CD8-positive, alpha-beta memory T cell (primary cell): ENCODE measurements at regions of chr6 and their contacts with region 1.

Region 1: GRCh38 chr6:34248727-34249551 is at the start of gene SMIM29:
- DNase-seq: peak; percentile 96 to 98 (median 97)
- H3K4me3 ChIP-seq: peak within 1 kb of the TSS; percentile 95
- H3K4me3 Mint-ChIP-seq: peak within 1 kb of the TSS; percentile 91 to 99 (median 92)
- H3K27ac ChIP-seq: peak within 1 kb of the TSS; percentile 89
- H3K27ac Mint-ChIP-seq: peak within 1 kb of the TSS; percentile 95 to 99 (median 97)
- H3K4me1 ChIP-seq: peaks cover 20% of the 10 kb centered on the region
- H3K4me1 Mint-ChIP-seq: peaks cover 21 to 52% (median 21%) of the 10 kb centered on the region in 3 donors
- H3K27me3 ChIP-seq: no peaks in the 10 kb centered on the region
- H3K27me3 Mint-ChIP-seq: peaks cover 0 to 1% of the 10 kb centered on the region in 2 donors
- total RNA-seq, gene SMIM29: 23.0 to 26.0 TPM

Region 2: DNA sequence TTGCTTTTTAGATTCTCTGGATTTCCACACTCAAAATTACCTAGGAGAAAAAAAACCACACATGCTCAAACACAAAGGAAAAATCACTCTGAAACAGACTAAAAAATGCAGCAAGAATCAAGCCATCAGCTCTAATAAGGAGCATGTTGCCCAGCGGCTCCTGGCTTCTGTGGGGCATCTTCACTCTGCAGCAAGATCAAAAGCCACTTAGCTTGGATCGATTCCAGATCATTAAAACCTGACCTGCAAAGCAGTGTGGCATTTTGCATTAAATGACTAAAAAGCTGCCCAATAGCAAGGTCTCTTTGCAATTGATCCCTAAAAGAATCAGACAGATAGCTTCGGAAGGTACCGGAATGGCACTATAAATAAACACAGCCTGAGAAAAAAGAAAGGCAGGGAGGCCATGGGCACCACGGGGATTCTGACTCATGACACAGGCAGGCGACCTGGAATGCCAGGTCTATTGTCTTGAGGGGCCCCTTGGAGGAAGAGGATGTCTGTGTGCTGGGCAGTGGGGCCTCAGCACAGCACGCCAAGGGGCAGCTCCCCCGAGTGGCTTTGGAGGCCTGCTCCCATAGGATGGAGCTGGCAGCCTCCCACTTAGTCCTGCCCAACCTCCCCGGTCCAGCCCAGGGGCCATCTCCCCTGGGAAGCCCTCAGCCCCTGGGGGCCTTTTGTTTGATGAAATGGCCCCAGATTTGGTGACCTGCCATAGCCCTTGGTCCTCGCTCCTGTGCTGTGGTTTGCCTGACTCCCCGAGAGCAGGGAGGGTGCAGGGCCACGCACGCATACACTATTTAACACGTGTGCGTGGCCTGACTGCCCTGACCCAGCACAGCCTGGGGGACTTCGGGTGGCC is 467.6 kb before region 1 on chr6:
- CTCF ChIA-PET with region 1: no interaction called
- POLR2A ChIA-PET with region 1: no interaction called
- DNase-seq: no peak
- H3K4me3 ChIP-seq: no peak overlapping the region
- H3K4me3 Mint-ChIP-seq: peak overlapping the region in 1 of 7 donors; percentile 61
- H3K27ac ChIP-seq: no peak overlapping the region
- H3K27ac Mint-ChIP-seq: no peak overlapping the region
- H3K4me1 ChIP-seq: peaks cover 16% of the 10 kb centered on the region
- H3K4me1 Mint-ChIP-seq: peaks cover 39 to 42% (median 41%) of the 10 kb centered on the region in 3 donors
- H3K27me3 ChIP-seq: no peaks in the 10 kb centered on the region
- H3K27me3 Mint-ChIP-seq: no peaks in the 10 kb centered on the region

Region 3: GRCh38 chr6:34161857-34162515 is 87.0 kb before region 1 on chr6:
- CTCF ChIA-PET with region 1: interaction called, 12 read pairs
- POLR2A ChIA-PET with region 1: no interaction called
- DNase-seq: no peak
- H3K4me3 ChIP-seq: no peak overlapping the region
- H3K4me3 Mint-ChIP-seq: no peak overlapping the region
- H3K27ac ChIP-seq: no peak overlapping the region
- H3K27ac Mint-ChIP-seq: no peak overlapping the region
- H3K4me1 ChIP-seq: no peaks in the 10 kb centered on the region
- H3K4me1 Mint-ChIP-seq: no peaks in the 10 kb centered on the region
- H3K27me3 ChIP-seq: no peaks in the 10 kb centered on the region
- H3K27me3 Mint-ChIP-seq: peaks cover 5 to 12% of the 10 kb centered on the region in 2 donors

Region 4: GRCh38 chr6:34223956-34224940 is 24.7 kb before region 1 on chr6:
- CTCF ChIA-PET with region 1: interaction called, 20 read pairs
- POLR2A ChIA-PET with region 1: interaction called, 18 read pairs
- DNase-seq: peak; percentile 88 to 97 (median 93)
- H3K4me3 ChIP-seq: peak overlapping the region; percentile 72
- H3K4me3 Mint-ChIP-seq: peak overlapping the region; percentile 59 to 88 (median 71)
- H3K27ac ChIP-seq: peak overlapping the region; percentile 92
- H3K27ac Mint-ChIP-seq: peak overlapping the region; percentile 64 to 99 (median 92)
- H3K4me1 ChIP-seq: peaks cover 15% of the 10 kb centered on the region
- H3K4me1 Mint-ChIP-seq: peaks cover 6 to 20% (median 8%) of the 10 kb centered on the region in 3 donors
- H3K27me3 ChIP-seq: no peaks in the 10 kb centered on the region
- H3K27me3 Mint-ChIP-seq: no peaks in the 10 kb centered on the region

Region 5: GRCh38 chr6:34414999-34415858 is 166.3 kb after region 1 on chr6:
- CTCF ChIA-PET with region 1: interaction called, 50 read pairs
- POLR2A ChIA-PET with region 1: interaction called, 4 read pairs
- DNase-seq: peak in 3 of 5 donors; percentile 20 to 50 (median 42)
- H3K4me3 ChIP-seq: no peak overlapping the region
- H3K4me3 Mint-ChIP-seq: no peak overlapping the region
- H3K27ac ChIP-seq: no peak overlapping the region
- H3K27ac Mint-ChIP-seq: peak overlapping the region in 2 of 8 donors; percentile 6 to 64
- H3K4me1 ChIP-seq: no peaks in the 10 kb centered on the region
- H3K4me1 Mint-ChIP-seq: peaks cover 4 to 11% (median 11%) of the 10 kb centered on the region in 3 donors
- H3K27me3 ChIP-seq: no peaks in the 10 kb centered on the region
- H3K27me3 Mint-ChIP-seq: no peaks in the 10 kb centered on the region

Region 6: DNA sequence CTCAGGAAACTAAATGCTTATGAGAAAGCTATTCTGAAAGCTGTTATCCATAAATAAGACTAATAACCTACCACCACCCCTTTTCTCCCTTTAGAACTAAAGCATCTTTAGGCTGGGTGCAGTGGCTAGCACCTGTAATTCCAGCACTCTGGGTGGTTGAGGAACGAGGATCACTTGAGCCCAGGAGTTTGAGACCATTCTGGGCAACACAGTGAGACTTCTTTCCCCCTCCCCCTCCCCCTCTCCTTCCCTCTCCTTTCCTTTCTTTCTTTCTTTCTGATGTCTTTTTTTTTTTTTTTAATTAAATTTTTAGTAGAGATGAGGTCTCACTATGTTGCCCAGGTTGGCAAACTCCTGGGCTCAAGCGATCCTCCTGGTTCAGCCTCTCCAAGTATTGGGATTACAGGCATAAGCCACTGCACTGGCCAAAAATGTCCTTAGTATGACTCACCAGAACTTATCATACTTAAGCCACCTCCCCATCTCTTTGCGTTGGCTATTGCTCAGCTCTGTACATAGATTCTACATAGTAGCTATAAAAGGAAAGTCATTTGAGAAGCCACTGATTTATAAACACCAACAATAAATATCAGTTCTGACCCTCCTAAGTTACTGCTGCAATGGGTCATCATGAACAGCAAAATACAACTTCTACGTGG is 362.0 kb after region 1 on chr6:
- CTCF ChIA-PET with region 1: interaction called, 16 read pairs
- POLR2A ChIA-PET with region 1: interaction called, 3 read pairs
- DNase-seq: no peak
- H3K4me3 ChIP-seq: no peak overlapping the region
- H3K4me3 Mint-ChIP-seq: no peak overlapping the region
- H3K27ac ChIP-seq: no peak overlapping the region
- H3K27ac Mint-ChIP-seq: peak overlapping the region in 6 of 8 donors; percentile 18 to 54 (median 44)
- H3K4me1 ChIP-seq: no peaks in the 10 kb centered on the region
- H3K4me1 Mint-ChIP-seq: peaks cover 4 to 24% (median 23%) of the 10 kb centered on the region in 3 donors
- H3K27me3 ChIP-seq: no peaks in the 10 kb centered on the region
- H3K27me3 Mint-ChIP-seq: no peaks in the 10 kb centered on the region